ENCODE measurements at regions of chr13 and their contacts with region 1.

Region 1: GRCh38 chr13:73913053-73913740 is 221.0 kb downstream of the KLF12 start:
- DNase-seq: no peak
- ATAC-seq: no peak
- H3K4me3 ChIP-seq: no peak overlapping the region
- H3K4me3 Mint-ChIP-seq: no peak overlapping the region
- H3K27ac ChIP-seq: no peak overlapping the region
- H3K27ac Mint-ChIP-seq: peak overlapping the region in 1 of 2 donors; percentile 73
- H3K4me1 ChIP-seq: peaks cover 0 to 5% of the 10 kb centered on the region in 2 experiments
- H3K4me1 Mint-ChIP-seq: peaks cover 54 to 63% (median 62%) of the 10 kb centered on the region in 3 donors
- H3K27me3 ChIP-seq: no peaks in the 10 kb centered on the region
- H3K27me3 Mint-ChIP-seq: no peaks in the 10 kb centered on the region

Region 2: GRCh38 chr13:73741111-73741510 is 172.1 kb before region 1 on chr13:
- CTCF ChIA-PET with region 1: interaction called in 1 of 2 experiments, 11 read pairs
- POLR2A ChIA-PET with region 1: no interaction called
- DNase-seq: peak in 6 of 35 experiments; percentile 1 to 30 (median 8)
- ATAC-seq: peak; percentile 46 to 76 (median 56)
- H3K4me3 ChIP-seq: no peak overlapping the region
- H3K4me3 Mint-ChIP-seq: peak overlapping the region in 2 of 3 donors; percentile 25 to 50
- H3K27ac ChIP-seq: no peak overlapping the region
- H3K27ac Mint-ChIP-seq: peak overlapping the region; percentile 15 to 71
- H3K4me1 ChIP-seq: peaks cover 9 to 25% of the 10 kb centered on the region in 2 experiments
- H3K4me1 Mint-ChIP-seq: peaks cover 52 to 55% (median 54%) of the 10 kb centered on the region in 3 donors
- H3K27me3 ChIP-seq: no peaks in the 10 kb centered on the region
- H3K27me3 Mint-ChIP-seq: no peaks in the 10 kb centered on the region